ENCODE measurements at regions of chr9 and their contacts with region 1.

Region 1: GRCh38 chr9:93453047-93453914 is at the start of gene FAM120AOS:
- DNase-seq: peak; percentile 81
- H3K4me3 Mint-ChIP-seq: peak within 1 kb of the TSS; percentile 98
- H3K27ac Mint-ChIP-seq: peak within 1 kb of the TSS; percentile 95
- H3K4me1 Mint-ChIP-seq: peaks cover 51% of the 10 kb centered on the region
- H3K27me3 Mint-ChIP-seq: no peaks in the 10 kb centered on the region
- total RNA-seq, gene FAM120AOS: 31.2 and 38.8 TPM in 2 replicates

Region 2: GRCh38 chr9:92293452-92294296 is 1159.6 kb before region 1 on chr9 and contains the start of gene IARS1:
- intact Hi-C with region 1: loop called (anchors 5 kb)
- DNase-seq: peak; percentile 100
- H3K4me3 Mint-ChIP-seq: peak within 1 kb of the TSS; percentile 98
- H3K27ac Mint-ChIP-seq: peak within 1 kb of the TSS; percentile 98
- H3K4me1 Mint-ChIP-seq: peaks cover 64% of the 10 kb centered on the region
- H3K27me3 Mint-ChIP-seq: no peaks in the 10 kb centered on the region
- total RNA-seq, gene IARS1: 208 and 217 TPM in 2 replicates

Region 3: DNA sequence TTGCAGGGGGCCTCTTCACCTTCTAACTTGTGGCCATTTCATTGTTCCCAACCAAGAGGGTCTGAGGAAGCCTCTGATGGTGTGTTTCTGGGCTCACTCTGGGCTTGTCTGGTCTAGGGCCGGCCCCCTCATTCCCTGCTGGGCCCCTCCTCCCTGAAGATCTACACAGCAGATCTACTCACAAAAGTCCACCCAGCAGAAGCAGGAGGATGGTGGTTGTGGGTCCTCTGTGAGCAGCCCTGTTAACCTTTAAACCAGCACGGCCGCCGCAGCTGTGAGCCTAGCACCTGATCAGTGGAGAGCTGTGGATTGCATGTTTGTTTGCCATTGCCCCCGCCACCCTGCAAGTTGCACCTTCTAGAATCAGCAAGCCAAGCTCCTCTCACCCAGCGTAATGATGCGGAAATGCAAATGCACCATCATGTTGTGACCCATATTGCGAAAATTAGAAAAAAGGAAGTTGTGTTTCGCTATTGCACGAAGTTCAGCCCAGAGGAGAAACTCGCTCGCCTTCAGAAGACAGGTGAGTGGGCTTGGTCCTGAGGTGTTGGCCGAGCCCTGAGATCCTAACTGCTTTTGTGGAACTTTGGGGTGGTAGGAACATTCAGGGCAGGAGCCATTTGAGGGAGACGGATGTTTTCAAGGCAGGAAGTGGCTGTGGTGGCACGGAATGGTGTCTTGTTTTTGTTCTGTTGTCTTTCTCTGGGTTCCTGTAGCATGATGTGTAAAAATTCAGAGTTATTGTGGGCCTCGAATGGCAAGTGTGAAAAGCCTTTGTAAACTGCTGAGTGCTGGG is 489.3 kb before region 1 on chr9:
- intact Hi-C with region 1: loop called (anchors 2 kb)
- DNase-seq: peak; percentile 77
- H3K4me3 Mint-ChIP-seq: peak overlapping the region; percentile 98
- H3K27ac Mint-ChIP-seq: peak overlapping the region; percentile 97
- H3K4me1 Mint-ChIP-seq: peaks cover 69% of the 10 kb centered on the region
- H3K27me3 Mint-ChIP-seq: no peaks in the 10 kb centered on the region

Region 4: DNA sequence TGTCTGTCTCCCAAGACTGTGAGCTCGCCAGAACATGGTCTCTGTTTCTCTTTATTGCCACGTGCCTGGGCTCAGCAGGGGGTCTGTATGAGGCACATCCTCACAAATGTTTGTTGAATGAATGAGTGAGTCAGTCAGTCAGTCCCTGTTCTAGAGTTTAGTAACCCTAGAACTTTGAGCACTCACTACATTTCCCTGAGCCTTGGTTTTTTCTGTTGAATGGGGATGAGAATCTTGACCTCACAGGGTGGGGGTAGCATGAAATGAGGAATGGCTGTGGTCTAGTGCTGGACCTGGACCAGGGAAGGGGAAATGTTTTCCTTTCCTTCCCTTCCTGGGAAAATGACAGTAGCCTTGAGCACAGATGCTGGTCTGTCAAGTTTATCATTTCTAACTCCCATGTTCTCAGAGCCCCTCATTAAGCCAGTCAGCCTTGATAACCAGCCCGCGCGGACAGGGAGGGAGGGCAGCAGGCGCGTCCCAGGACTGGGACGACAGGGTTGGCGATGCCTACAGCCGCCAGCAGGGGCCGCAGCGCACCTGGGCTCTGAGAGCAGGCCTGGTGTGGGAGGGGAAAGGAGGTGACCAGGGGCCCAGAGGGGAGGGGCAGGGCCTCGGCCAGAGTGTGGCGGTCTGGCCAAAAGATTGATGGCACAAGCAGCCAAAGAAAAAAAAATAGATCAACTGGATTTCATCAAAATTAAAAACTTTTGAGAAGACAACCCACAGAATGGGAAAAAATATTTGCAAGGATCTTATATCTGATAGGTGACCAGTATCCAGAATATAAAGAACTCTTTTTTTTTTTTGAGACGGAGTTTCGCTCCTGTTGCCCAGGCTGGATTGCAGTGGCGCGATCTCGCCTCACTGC is 293.4 kb before region 1 on chr9:
- intact Hi-C with region 1: loop called (anchors 1 kb)
- DNase-seq: peak; percentile 67
- H3K4me3 Mint-ChIP-seq: no peak overlapping the region
- H3K27ac Mint-ChIP-seq: no peak overlapping the region
- H3K4me1 Mint-ChIP-seq: peaks cover 25% of the 10 kb centered on the region
- H3K27me3 Mint-ChIP-seq: no peaks in the 10 kb centered on the region

Region 5: DNA sequence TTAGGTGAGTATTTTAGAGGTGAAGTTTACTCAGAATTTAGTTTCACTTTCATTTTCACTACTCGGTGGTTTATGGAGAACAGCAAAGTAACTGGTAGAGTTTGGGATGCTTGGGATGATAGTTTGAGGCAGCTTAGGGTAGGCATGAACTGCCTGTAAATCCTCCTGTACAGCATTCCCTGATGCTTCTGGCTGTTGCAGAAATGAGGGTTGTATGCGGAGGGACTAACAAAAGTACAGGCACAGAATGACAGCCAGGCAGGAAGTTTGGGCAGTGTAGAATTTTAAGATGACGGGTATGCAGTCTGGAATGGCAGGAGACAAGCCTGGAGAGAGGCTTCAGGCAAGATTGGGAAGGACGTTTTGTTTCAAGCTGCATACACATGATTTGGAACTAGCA is 48.1 kb after region 1 on chr9:
- intact Hi-C with region 1: loop called (anchors 2 kb)
- DNase-seq: no peak
- H3K4me3 Mint-ChIP-seq: peak overlapping the region; percentile 81
- H3K27ac Mint-ChIP-seq: peak overlapping the region; percentile 72
- H3K4me1 Mint-ChIP-seq: peaks cover 49% of the 10 kb centered on the region
- H3K27me3 Mint-ChIP-seq: no peaks in the 10 kb centered on the region

Region 6: DNA sequence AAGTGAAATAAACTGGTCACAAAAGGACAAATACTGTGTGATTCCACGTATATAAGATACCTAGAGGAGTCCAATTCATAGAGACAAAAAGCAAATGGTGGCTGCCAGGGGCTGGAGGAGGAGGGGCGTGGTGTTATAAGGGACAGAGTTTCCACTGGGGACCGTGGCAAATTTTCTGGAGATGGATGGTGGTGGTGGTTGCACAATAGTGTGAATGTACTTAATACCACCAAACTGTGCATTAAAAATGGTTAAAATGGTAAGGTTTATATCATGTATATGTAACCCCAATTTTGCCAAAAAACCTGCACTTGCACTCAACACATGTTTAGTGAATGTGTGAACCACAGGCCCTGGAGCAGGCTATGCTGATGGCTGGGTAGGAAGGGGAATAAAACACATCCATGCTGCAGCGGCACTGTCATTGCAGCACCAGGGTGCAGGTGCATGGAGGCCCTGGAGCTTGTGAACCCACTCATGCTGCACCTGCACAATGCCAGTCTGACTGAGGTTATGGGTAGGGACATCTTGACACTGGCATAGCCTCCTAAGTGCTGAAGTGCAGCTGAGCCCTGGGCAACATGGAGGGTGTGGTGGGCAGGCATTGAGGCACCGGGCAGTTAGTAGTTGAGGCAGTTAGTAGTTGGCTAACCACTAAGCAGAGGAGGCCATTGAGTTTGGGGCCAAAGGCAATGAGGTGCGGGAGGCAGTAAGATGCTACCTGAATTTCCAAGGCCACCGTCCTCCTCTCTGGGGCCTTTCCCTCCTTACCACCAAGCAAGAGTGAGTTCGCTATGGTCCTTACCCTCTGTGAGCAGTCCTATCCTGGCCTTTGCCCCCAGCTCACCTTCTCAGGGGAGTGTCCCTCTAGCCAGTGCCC is 119.6 kb after region 1 on chr9:
- intact Hi-C with region 1: no loop called
- DNase-seq: no peak
- H3K4me3 Mint-ChIP-seq: no peak overlapping the region
- H3K27ac Mint-ChIP-seq: no peak overlapping the region
- H3K4me1 Mint-ChIP-seq: peaks cover 15% of the 10 kb centered on the region
- H3K27me3 Mint-ChIP-seq: no peaks in the 10 kb centered on the region

Region 7: DNA sequence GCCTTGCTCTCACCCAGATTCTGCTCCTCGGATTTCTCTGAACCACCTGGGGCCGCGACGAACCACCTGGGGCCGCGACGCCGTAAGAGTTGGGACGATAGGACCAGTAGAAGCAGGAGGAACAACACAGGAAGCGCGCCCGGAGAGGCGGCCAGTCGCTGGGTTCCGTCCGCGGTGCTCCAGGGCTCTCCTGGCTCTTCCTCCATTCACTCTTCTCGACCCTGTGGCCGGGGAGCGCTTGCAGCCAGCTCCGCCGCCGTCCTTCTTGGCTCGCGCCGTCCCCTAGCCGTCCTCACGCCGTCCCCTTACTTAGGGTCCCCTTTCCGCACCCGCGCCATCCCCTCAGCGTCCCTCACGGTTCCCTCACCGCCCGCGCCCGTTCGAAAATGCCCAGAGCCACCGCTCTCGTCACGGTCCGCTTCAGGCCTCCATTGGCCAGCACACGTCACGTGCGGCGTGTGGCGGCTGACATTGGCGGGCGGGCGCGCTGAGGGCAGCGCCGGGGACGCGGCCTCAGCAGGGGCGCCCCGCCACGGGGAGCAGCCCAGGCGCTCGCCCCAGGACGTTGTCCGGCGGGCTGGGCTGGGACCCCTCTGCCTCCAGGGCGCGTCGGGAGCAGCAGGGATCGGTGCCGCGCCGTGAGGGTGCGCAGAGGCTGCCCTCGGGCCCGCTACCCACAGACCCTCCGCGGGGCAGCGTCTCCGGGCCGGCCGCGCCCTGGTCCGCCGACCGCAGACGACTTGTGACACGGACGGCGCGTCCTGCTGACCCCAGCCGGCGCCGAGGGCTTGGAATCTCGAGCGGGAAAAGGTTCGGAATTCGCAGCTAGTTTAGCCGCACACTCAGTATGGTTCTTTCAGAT is 577.3 kb after region 1 on chr9:
- intact Hi-C with region 1: loop called (anchors 5 kb)
- DNase-seq: peak; percentile 79
- H3K4me3 Mint-ChIP-seq: peak overlapping the region; percentile 99
- H3K27ac Mint-ChIP-seq: peak overlapping the region; percentile 96
- H3K4me1 Mint-ChIP-seq: peaks cover 21% of the 10 kb centered on the region
- H3K27me3 Mint-ChIP-seq: peaks cover 7% of the 10 kb centered on the region